ENCODE measurements at regions of chr17 and their contacts with region 1.

Region 1: GRCh38 chr17:81394921-81395599 is at the start of gene BAHCC1:
- DNase-seq: peak; percentile 100
- ATAC-seq: peak; percentile 74
- H3K4me3 ChIP-seq: peak within 1 kb of the TSS; percentile 82 to 83
- H3K27ac ChIP-seq: peak within 1 kb of the TSS; percentile 99
- H3K4me1 ChIP-seq: peaks cover 25 to 46% of the 10 kb centered on the region in 2 experiments
- H3K27me3 ChIP-seq: no peaks in the 10 kb centered on the region
- CTCF ChIP-seq: no peak
- POLR2A ChIP-seq: peak; percentile 99
- RAD21 ChIP-seq: no peak
- total RNA-seq, gene BAHCC1: 45.2 TPM

Region 2: DNA sequence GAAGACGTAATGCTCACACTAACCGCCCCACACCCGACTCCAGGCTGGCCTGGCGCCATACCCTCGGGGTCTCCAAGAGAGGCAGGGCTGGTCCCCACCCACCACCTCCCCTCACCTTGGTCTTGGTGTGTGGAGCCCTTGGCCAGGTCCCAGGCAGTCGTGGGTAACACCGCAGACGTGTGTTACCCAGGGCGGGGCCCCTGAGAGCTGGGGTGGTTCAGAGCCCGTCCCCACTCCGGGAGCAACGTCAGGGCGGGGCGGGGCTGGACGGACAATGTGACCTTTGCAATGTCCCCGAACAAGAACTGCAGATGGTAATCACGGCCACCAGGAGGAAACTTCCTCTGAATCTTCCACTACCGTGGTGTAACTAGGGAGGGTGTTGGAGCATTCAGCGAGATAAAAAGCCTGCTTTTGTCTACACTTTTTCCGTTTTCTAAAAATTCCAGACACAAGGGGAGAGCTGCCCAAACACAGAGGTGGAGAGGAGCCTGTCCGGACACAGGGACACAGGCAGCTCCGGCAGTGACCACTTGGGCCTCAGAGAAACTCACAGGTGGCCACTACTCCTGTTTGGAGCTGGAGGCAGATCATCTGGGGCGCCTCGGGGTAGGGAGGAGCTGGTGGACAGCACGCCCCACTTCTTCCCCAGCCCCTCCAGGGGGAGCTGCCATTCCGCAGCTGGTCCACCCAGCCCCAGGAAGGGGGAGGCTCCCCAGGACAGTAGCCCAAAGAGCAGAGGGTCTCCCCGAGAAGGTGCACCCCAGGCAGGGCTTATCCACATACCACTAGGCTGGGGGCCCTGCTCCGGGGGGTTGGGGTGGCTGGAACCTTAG is 85.8 kb before region 1 on chr17:
- CTCF ChIA-PET with region 1: interaction called, 7 read pairs
- POLR2A ChIA-PET with region 1: interaction called, 10 read pairs
- RAD21 ChIA-PET with region 1: interaction called in 1 of 2 experiments, 3 read pairs
- intact Hi-C with region 1: no loop called
- DNase-seq: peak; percentile 85
- ATAC-seq: peak; percentile 95
- H3K4me3 ChIP-seq: peak overlapping the region; percentile 69 to 78
- H3K27ac ChIP-seq: peak overlapping the region; percentile 88
- H3K4me1 ChIP-seq: peaks cover 33 to 37% of the 10 kb centered on the region in 2 experiments
- H3K27me3 ChIP-seq: no peaks in the 10 kb centered on the region
- CTCF ChIP-seq: peak in 2 of 3 experiments; percentile 69 to 77; a peak in 4 of 6 replicates
- POLR2A ChIP-seq: peak; percentile 77
- RAD21 ChIP-seq: peak; percentile 58

Region 3: GRCh38 chr17:81365148-81365600 is 29.9 kb before region 1 on chr17:
- CTCF ChIA-PET with region 1: interaction called, 4 read pairs
- POLR2A ChIA-PET with region 1: interaction called, 19 read pairs
- RAD21 ChIA-PET with region 1: no interaction called
- intact Hi-C with region 1: no loop called
- DNase-seq: peak; percentile 72
- ATAC-seq: peak; percentile 87
- H3K4me3 ChIP-seq: peak overlapping the region; percentile 47 to 61
- H3K27ac ChIP-seq: peak overlapping the region; percentile 68
- H3K4me1 ChIP-seq: peaks cover 45 to 51% of the 10 kb centered on the region in 2 experiments
- H3K27me3 ChIP-seq: peaks cover 4% of the 10 kb centered on the region; the same call in 1 of the 2 replicates
- CTCF ChIP-seq: no peak
- POLR2A ChIP-seq: peak; percentile 1
- RAD21 ChIP-seq: no peak

Region 4: GRCh38 chr17:81419328-81419885 is 24.3 kb after region 1 on chr17:
- CTCF ChIA-PET with region 1: interaction called, 4 read pairs
- POLR2A ChIA-PET with region 1: interaction called, 10 read pairs
- RAD21 ChIA-PET with region 1: interaction called, 3 read pairs
- intact Hi-C with region 1: loop called (anchors 2 kb)
- DNase-seq: peak; percentile 71
- ATAC-seq: peak; percentile 87
- H3K4me3 ChIP-seq: peak overlapping the region; percentile 45 to 59
- H3K27ac ChIP-seq: peak overlapping the region; percentile 84
- H3K4me1 ChIP-seq: peaks cover 56 to 77% of the 10 kb centered on the region in 2 experiments
- H3K27me3 ChIP-seq: no peaks in the 10 kb centered on the region
- CTCF ChIP-seq: no peak
- POLR2A ChIP-seq: no peak
- RAD21 ChIP-seq: no peak

Region 5: GRCh38 chr17:81471804-81472456 is 76.9 kb after region 1 on chr17:
- CTCF ChIA-PET with region 1: interaction called, 7 read pairs
- POLR2A ChIA-PET with region 1: interaction called, 14 read pairs
- RAD21 ChIA-PET with region 1: interaction called, 3 to 5 read pairs
- intact Hi-C with region 1: loop called (anchors 2 kb)
- DNase-seq: peak; percentile 99
- ATAC-seq: peak; percentile 94
- H3K4me3 ChIP-seq: peak overlapping the region; percentile 51 to 58
- H3K27ac ChIP-seq: peak overlapping the region; percentile 59
- H3K4me1 ChIP-seq: peaks cover 6 to 30% of the 10 kb centered on the region in 2 experiments; a peak in 3 of 4 replicates
- H3K27me3 ChIP-seq: no peaks in the 10 kb centered on the region
- CTCF ChIP-seq: peak; percentile 74 to 90 (median 88)
- POLR2A ChIP-seq: peak; percentile 98
- RAD21 ChIP-seq: peak; percentile 99

Measured in HCT116 (cell line).